AG04450 (cell line): ENCODE measurements at regions of chr20 and their contacts with region 1.

Region 1: DNA sequence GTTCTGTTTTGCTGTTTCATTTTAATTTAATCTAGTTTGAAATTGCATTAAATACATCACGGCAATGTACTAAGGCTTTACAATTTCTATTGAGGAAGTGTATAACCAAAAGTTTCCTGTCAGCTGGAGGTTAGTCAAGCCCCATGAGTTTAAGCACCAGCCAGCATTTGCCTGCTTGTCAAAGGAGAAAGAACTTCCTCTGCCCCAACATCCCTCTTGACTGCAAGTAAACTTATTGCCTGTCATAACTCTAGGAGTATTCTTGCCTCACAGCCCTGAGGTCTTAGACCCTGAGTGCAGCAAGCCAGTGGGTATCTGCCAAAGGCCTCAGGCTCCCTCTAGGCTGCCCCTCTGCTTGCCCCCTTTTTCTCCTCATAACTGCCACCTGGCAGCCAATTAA is 106.7 kb upstream of the INSM1 start:
- DNase-seq: no peak
- H3K4me3 ChIP-seq: no peak overlapping the region
- H3K27ac ChIP-seq: no peak overlapping the region
- H3K27me3 ChIP-seq: no peaks in the 10 kb centered on the region
- CTCF ChIP-seq: no peak

Region 2: GRCh38 chr20:20273281-20273680 is 12.1 kb after region 1 on chr20:
- CTCF ChIA-PET with region 1: no interaction called
- POLR2A ChIA-PET with region 1: interaction called, 11 read pairs
- DNase-seq: no peak
- H3K4me3 ChIP-seq: no peak overlapping the region
- H3K27ac ChIP-seq: no peak overlapping the region
- H3K27me3 ChIP-seq: peaks cover 8% of the 10 kb centered on the region
- CTCF ChIP-seq: no peak

Region 3: GRCh38 chr20:20452254-20452676 is 191.1 kb after region 1 on chr20:
- CTCF ChIA-PET with region 1: no interaction called
- POLR2A ChIA-PET with region 1: no interaction called
- DNase-seq: peak; percentile 11
- H3K4me3 ChIP-seq: peak overlapping the region; percentile 39
- H3K27ac ChIP-seq: no peak overlapping the region
- H3K27me3 ChIP-seq: no peaks in the 10 kb centered on the region
- CTCF ChIP-seq: no peak